Posterior vena cava (tissue), 2 donors: ENCODE measurements at regions of chr2 and their contacts with region 1.

Region 1: DNA sequence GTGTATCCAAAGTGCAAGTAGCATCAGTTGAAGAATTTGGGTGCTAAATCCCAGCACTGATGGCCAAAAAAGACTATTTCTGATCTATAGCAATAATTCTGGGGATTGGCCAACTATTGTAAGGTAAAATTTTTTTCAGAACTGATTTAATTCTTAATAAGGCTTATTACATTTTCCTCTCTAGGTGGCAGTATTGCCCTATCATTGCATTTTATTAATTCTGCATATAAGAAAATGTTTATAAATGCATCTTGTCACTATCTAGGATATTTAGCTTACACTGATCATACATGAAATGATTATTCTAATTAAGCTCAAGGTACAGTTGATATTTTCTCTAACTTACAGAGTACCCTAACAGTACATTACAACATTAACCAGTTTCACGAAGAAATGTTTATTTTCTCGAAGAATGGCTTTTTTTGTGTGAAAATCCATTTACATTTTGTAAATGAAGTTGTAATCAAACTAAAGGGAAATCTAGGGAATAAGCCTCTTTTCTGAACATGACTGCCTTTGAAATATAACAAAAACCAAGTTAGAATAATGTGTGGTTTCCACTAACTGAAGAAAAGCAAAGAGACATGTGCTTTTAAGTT is 11.0 kb downstream of the TTN start:
- DNase-seq: no peak

Region 2: DNA sequence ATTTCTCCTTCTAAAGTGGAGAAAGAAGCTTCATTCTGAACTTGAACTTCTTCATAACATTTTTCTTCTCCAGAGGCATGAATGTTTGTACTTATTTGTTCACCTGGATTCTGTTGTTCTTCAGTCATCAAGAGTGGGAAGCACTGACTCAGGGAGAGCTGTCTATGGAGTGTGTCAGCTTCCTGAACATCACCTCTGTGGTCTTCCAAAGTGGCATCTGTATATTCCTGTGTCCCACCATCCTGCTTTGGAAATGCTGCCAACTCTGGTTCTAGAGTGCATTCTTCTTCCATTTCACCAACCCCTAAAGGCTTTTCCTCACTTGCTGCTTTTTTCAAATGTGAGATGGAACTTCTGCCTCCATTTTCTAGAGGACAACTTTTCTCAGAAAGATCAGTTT is 48.4 kb before region 1 on chr2:
- intact Hi-C with region 1: no loop called
- DNase-seq: no peak

Region 3: DNA sequence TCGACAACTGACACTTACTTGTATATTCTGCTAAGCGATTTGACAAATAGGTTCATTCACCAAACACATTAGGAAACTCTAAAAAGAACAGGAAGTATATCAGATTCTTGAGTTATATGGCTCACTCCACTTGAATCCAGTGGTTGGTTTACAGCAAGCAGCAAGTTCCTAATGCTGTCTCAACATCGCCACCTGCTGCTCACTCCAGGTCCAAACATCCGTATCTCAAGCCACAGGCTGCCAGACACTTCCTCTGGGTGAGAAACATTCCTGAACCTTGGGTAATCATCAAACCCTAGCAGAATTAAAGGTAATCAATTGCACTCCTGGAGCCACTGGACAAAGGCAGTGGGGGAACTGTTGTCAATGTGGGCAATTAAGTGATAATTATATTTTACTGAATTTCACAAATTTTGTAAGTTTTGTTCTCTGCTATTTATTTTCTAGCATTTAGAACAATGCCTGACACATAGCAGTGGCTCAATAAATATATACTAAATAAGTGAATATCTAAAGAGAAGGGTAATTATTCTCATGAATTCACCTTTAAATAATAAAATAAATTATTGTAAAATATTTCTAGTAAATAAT is 118.2 kb after region 1 on chr2:
- intact Hi-C with region 1: loop called (anchors 5 kb)
- DNase-seq: peak; percentile 93

Region 4: GRCh38 chr2:179373816-179374215 is 577.6 kb after region 1 on chr2:
- intact Hi-C with region 1: loop called in 1 of 2 experiments (anchors 5 kb)
- DNase-seq: no peak